Activated CD8-positive, alpha-beta memory T cell treated with anti-CD3 and anti-CD28 coated beads, Interleukin-2, amount 10 ng/mL, durations not matched to agents 7 days and 5 days (primary cell): ENCODE measurements at regions of chr17 and their contacts with region 1.

Region 1: DNA sequence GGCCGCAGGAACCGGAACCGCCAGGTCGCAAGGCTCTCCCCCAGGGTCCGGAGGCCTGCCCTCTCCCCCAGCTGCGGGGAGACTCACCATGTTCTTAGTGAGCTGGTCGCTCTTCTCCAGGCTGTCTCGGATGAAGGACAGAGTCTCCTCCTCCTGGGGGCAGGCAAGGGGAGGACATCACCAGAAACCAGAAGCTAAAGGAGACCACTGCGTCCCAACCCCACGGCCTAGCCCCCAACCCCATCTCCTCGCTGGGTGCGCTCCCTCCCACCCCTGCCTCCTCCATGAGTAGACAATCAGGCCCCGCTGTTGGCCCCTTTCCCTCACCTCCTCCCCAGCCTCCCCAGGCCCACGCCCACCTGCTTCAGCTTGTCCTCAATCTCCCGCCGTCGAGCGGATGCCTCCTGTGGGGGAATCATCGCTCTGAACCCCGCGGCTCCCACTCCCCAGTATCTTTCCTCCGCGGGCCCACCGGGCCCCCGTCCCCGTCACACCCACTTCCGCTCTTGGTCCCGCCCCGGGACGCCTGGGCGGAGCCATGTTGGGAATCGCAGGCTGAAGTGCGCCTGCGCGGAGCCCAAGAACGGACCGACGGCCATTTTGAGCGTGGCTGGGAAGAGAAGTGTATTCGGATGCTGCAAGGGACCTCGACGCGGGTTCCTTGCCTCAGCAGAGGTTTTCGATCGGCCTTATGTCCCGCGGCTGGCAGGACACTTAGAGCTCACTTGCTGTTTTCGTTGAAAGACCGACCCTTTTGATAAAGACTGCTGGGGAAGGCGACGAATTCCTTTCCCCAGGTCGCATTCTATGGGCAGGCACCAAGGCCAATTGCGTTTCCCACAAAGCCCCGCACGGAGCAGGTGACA is at the start of gene EXOC7:
- DNase-seq: peak; percentile 94
- ATAC-seq: peak; percentile 94
- H3K4me3 Mint-ChIP-seq: peak within 1 kb of the TSS; percentile 98
- H3K27ac Mint-ChIP-seq: peak within 1 kb of the TSS; percentile 97
- H3K4me1 Mint-ChIP-seq: peaks cover 16% of the 10 kb centered on the region
- H3K27me3 Mint-ChIP-seq: no peaks in the 10 kb centered on the region
- total RNA-seq, gene EXOC7: 132 to 137 TPM

Region 2: GRCh38 chr17:76296186-76296585 is 192.7 kb after region 1 on chr17:
- CTCF ChIA-PET with region 1: interaction called, 13 read pairs
- DNase-seq: no peak
- ATAC-seq: no peak
- H3K4me3 Mint-ChIP-seq: no peak overlapping the region
- H3K27ac Mint-ChIP-seq: no peak overlapping the region
- H3K4me1 Mint-ChIP-seq: peaks cover 3% of the 10 kb centered on the region
- H3K27me3 Mint-ChIP-seq: no peaks in the 10 kb centered on the region